Activated CD4-positive, alpha-beta T cell treated with anti-CD3 and anti-CD28 coated beads, Interleukin-2, amount 10 ng/mL, durations not matched to agents 24 days and 14 days (primary cell): ENCODE measurements at regions of chr7 and their contacts with region 1.

Region 1: GRCh38 chr7:100896732-100897608 is 1.3 kb upstream of the ACHE start:
- DNase-seq: peak; percentile 91
- H3K4me3 Mint-ChIP-seq: peak overlapping the region; percentile 45
- H3K27ac Mint-ChIP-seq: no peak overlapping the region
- H3K4me1 Mint-ChIP-seq: peaks cover 7% of the 10 kb centered on the region
- H3K27me3 Mint-ChIP-seq: peaks cover 51% of the 10 kb centered on the region

Region 2: DNA sequence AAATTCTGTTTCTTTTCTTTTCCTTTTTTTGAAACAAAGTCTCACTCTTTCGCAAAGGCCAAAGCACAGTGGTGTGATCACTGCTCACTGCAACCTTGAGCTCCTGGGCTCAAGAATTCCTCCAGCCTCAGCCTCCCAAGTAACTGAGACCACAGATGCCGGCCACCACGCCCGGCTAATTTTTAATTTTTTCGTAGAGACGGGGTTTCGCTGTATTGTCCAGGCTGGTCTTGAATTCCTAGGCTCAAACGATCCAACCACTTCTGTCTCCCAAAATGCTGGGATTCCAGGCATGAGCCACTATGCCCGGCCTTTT is 162.6 kb after region 1 on chr7:
- intact Hi-C with region 1: loop called (anchors 1 kb)
- DNase-seq: no peak
- H3K4me3 Mint-ChIP-seq: no peak overlapping the region
- H3K27ac Mint-ChIP-seq: no peak overlapping the region
- H3K4me1 Mint-ChIP-seq: peaks cover 2% of the 10 kb centered on the region
- H3K27me3 Mint-ChIP-seq: peaks cover 27% of the 10 kb centered on the region

Region 3: GRCh38 chr7:101077303-101078089 is 180.5 kb after region 1 on chr7:
- intact Hi-C with region 1: loop called (anchors 2 kb)
- DNase-seq: peak; percentile 95
- H3K4me3 Mint-ChIP-seq: no peak overlapping the region
- H3K27ac Mint-ChIP-seq: no peak overlapping the region
- H3K4me1 Mint-ChIP-seq: peaks cover 7% of the 10 kb centered on the region
- H3K27me3 Mint-ChIP-seq: peaks cover 18% of the 10 kb centered on the region